K562 (cell line): ENCODE measurements at regions of chrX and their contacts with region 1.

Region 1: GRCh38 chrX:48475774-48476577 is at the start of gene FTSJ1:
- DNase-seq: peak; percentile 77 to 93 (median 82)
- ATAC-seq: peak; percentile 90
- H3K4me3 ChIP-seq: peak within 1 kb of the TSS; percentile 94
- H3K27ac ChIP-seq: peak within 1 kb of the TSS; percentile 85
- H3K4me1 ChIP-seq: peaks cover 9 to 25% of the 10 kb centered on the region in 2 experiments; a peak in 4 of 5 replicates
- H3K27me3 ChIP-seq: no peaks in the 10 kb centered on the region
- CTCF ChIP-seq: 0 out of 6 replicates have a peak, but pooled peaks of 1 of the 3 experiments have one; percentile 1
- EP300 ChIP-seq: no peak
- POLR2A ChIP-seq: peak; percentile 79
- RAD21 ChIP-seq: no peak
- polyA plus RNA-seq, gene FTSJ1: 12.2 to 17.4 TPM

Region 2: DNA sequence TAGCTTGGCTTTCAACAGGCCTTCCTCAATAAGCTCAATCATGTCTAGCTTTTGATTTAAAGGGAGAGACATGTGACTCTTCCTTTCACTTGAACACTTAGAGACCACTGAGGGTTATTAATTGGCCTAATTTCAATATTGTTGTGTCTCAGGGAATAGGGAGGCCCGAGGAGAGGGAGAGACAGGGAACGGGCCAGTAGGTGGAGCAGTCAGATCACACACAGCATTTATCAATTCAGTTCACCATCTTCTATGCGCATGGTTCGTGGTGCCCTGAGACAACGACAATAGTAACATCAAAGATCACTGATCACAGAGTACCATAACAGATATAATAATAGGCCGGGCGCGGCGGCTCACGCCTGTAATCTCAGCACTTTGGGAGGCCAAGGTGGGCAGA is 621.5 kb before region 1 on chrX:
- CTCF ChIA-PET with region 1: no interaction called
- POLR2A ChIA-PET with region 1: no interaction called
- in situ Hi-C with region 1: loop called (anchors 25 kb)
- intact Hi-C with region 1: no loop called
- DNase-seq: peak in 1 of 4 experiments; percentile 24
- ATAC-seq: peak; percentile 67; the same call in 2 of the 3 replicates
- H3K4me3 ChIP-seq: no peak overlapping the region
- H3K27ac ChIP-seq: no peak overlapping the region
- H3K4me1 ChIP-seq: no peaks in the 10 kb centered on the region; a peak in 1 of 5 replicates
- H3K27me3 ChIP-seq: no peaks in the 10 kb centered on the region
- CTCF ChIP-seq: peak; percentile 40 to 56 (median 48); a peak in 4 of 6 replicates
- EP300 ChIP-seq: no peak
- POLR2A ChIP-seq: no peak
- RAD21 ChIP-seq: peak in 1 of 2 experiments; percentile 51; a peak in 3 of 4 replicates